Activated T-helper 1 cell treated with anti-CD3 and anti-CD28 coated beads, Interleukin-12 subunit alpha, Interleukin-12 subunit beta, Interleukin-2, Interleukin-4 antibody, amounts not matched to agents 30 ng/mL and 10 ng/mL and 1 ng/mL, durations not matched to agents 14 hours and 24 hours and 36 hours (primary cell): ENCODE measurements at regions of chr2 and their contacts with region 1.

Region 1: GRCh38 chr2:182980115-182980514 is 58.1 kb downstream of the NCKAP1 start:
- DNase-seq: no peak
- H3K4me3 Mint-ChIP-seq: no peak overlapping the region
- H3K27ac Mint-ChIP-seq: no peak overlapping the region
- H3K4me1 Mint-ChIP-seq: no peaks in the 10 kb centered on the region
- H3K27me3 Mint-ChIP-seq: no peaks in the 10 kb centered on the region

Region 2: DNA sequence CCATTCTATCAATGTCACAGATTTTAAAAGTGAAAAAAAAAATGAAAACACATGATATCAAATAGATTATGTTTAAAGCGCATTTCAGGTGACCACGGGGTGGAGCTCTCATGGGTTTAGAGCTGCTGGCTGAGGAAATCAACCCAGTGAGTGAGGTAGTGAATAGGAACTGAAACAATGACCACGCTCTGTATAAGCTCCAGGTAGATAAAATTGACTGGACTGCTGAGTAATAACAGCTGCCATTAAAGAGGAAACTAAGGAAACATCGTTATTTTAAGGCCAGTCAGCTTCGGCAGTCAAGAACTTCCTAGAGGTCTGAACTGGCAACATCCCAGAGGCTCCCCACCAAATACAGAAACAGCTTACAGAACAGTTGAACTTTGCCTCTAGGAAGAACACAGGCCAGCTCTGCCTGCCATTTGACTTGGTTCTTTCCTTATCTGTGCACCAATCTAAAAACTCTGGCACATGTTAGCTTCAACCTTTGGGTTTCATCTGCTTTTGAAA is 739.2 kb before region 1 on chr2:
- intact Hi-C with region 1: loop called (anchors 5 kb)
- DNase-seq: no peak
- H3K4me3 Mint-ChIP-seq: no peak overlapping the region
- H3K27ac Mint-ChIP-seq: no peak overlapping the region
- H3K4me1 Mint-ChIP-seq: no peaks in the 10 kb centered on the region
- H3K27me3 Mint-ChIP-seq: no peaks in the 10 kb centered on the region

Region 3: GRCh38 chr2:182763311-182763912 is 216.7 kb before region 1 on chr2:
- intact Hi-C with region 1: loop called (anchors 1 kb)
- DNase-seq: no peak
- H3K4me3 Mint-ChIP-seq: no peak overlapping the region
- H3K27ac Mint-ChIP-seq: no peak overlapping the region
- H3K4me1 Mint-ChIP-seq: peaks cover 8% of the 10 kb centered on the region
- H3K27me3 Mint-ChIP-seq: no peaks in the 10 kb centered on the region

Region 4: GRCh38 chr2:182866461-182867406 is 113.4 kb before region 1 on chr2 and contains the start of gene FRZB:
- intact Hi-C with region 1: loop called (anchors 2 kb)
- DNase-seq: no peak
- H3K4me3 Mint-ChIP-seq: peak within 1 kb of the TSS; percentile 75
- H3K27ac Mint-ChIP-seq: no peak within 1 kb of the TSS
- H3K4me1 Mint-ChIP-seq: peaks cover 18% of the 10 kb centered on the region
- H3K27me3 Mint-ChIP-seq: peaks cover 49% of the 10 kb centered on the region
- total RNA-seq, gene FRZB: not detected in 2 replicates

Region 5: DNA sequence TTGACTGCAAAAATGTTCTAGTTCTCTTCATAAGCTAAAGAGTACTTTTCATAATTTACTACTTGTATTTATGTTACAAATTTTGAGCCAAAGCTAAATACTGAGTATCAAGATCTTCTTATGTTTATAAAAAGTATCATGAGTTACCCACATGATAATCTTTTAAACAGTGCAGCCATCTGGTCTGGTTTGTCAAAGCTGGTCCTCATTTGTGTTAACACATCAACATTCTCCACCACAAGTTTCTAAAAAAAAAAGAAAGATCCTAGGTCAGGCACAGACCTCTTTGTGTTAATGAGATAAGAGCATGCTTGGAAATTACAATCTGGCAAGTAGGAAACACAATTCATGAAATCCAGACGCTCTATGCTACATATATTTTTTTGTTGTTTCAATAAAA is 38.2 kb before region 1 on chr2:
- intact Hi-C with region 1: no loop called
- DNase-seq: no peak
- H3K4me3 Mint-ChIP-seq: no peak overlapping the region
- H3K27ac Mint-ChIP-seq: no peak overlapping the region
- H3K4me1 Mint-ChIP-seq: peaks cover 8% of the 10 kb centered on the region
- H3K27me3 Mint-ChIP-seq: no peaks in the 10 kb centered on the region